Breast epithelium (tissue), 4 donors: ENCODE measurements at regions of chr3 and their contacts with region 1.

Region 1: DNA sequence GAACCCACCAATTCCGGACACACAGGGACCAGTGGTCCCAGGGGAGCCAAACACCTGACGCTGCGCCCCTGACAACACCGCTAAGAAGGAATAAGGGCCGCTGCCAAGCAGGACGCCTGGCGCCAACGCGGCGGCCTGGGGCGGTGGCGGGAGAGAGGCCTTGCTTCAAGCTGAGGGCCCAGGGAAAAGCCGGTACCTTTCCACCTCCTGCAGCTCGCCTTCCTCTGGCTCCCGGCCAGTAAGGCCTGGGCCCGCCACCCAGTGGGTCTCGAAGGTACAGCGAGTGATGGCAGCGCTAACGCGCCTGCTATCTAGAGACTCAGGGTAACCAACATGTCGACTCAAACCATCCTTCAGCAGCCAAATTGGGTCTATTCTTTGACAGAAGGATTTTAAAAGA is 1074.1 kb downstream of the SI start:
- DNase-seq: no peak
- H3K4me3 ChIP-seq: no peak overlapping the region
- H3K27ac ChIP-seq: no peak overlapping the region
- H3K4me1 ChIP-seq: no peaks in the 10 kb centered on the region
- H3K27me3 ChIP-seq: no peaks in the 10 kb centered on the region
- CTCF ChIP-seq: no peak
- POLR2A ChIP-seq: no peak

Region 2: DNA sequence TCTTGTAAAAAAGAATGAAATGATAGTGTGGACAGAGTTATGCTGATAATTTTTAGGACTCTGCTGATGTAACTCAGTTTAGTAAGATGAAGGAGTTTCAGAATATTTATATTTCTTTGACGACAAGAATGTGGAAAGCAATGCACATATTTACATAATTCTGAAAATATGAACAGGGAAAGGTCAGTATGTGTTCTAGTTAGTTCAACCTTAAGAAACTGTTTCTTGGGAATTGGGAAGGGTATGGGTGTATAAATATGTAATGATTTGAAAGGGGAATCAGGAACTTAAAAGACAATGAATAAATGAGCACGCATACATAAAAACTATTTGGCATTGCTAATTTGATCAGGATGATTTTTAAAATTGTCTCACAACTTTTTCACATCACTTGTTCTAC is 152.0 kb before region 1 on chr3:
- intact Hi-C with region 1: loop called (anchors 5 kb)
- DNase-seq: no peak
- H3K4me3 ChIP-seq: no peak overlapping the region
- H3K27ac ChIP-seq: no peak overlapping the region
- H3K4me1 ChIP-seq: no peaks in the 10 kb centered on the region
- H3K27me3 ChIP-seq: no peaks in the 10 kb centered on the region
- CTCF ChIP-seq: no peak
- POLR2A ChIP-seq: no peak

Region 3: DNA sequence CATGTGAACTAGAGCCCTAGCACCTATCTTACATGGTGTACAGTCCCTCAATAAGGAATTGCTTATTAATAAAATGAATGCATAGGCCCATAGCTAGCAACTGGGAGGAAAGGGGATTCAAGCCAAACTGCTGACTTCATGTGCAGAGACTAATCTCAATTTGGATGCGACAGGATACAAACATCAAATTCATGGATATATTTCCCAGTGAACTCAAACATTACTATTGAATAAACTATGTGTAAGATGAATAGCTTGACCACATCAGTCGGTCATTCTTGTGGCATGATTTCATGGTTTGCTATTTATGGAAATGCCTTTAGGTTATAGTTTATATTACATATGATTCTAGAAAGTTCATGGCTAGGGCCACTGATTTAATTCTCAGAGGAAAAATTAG is 1460.5 kb after region 1 on chr3:
- intact Hi-C with region 1: loop called (anchors 5 kb)
- DNase-seq: no peak
- H3K4me3 ChIP-seq: no peak overlapping the region
- H3K27ac ChIP-seq: no peak overlapping the region
- H3K4me1 ChIP-seq: no peaks in the 10 kb centered on the region
- H3K27me3 ChIP-seq: no peaks in the 10 kb centered on the region
- CTCF ChIP-seq: no peak
- POLR2A ChIP-seq: no peak